ENCODE measurements at regions of chr19 and their contacts with region 1.

Region 1: DNA sequence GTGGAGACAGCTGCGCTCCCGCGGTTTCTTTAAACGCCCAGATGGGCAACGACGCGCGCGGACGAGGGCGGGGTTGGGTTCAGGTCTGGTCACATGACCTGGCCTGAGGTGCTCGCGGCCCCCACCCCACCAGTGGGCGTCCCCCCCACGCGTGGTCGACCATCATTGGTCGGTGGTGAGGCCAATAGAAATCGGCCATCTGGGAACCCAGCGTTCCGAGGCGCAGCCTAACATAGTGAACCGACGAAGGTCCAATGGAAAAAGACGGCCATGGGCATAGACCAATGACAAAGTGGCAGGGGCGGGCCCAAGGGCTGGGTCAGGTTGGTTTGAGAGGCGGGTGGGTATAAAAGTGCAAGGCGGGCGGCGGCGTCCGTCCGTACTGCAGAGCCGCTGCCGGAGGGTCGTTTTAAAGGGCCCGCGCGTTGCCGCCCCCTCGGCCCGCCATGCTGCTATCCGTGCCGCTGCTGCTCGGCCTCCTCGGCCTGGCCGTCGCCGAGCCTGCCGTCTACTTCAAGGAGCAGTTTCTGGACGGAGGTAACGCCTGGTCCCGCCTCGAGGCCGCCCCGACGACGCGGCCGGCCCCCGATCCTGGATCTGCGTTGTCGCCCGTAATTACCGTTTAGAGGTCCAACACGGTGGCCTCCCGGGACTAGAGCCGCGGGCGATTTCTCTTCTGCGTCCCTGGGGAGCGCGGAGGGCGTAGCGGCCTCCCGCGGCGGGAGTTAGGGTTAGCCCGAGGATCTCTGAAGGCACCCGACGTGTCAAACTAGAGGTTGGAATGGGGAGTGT is at the start of gene CALR:
- DNase-seq: peak; percentile 93 to 100 (median 99)
- ATAC-seq: peak; percentile 94
- H3K4me3 ChIP-seq: peak within 1 kb of the TSS; percentile 90
- H3K4me3 Mint-ChIP-seq: peak within 1 kb of the TSS; percentile 90 to 99 (median 98)
- H3K27ac ChIP-seq: peak within 1 kb of the TSS; percentile 94
- H3K27ac Mint-ChIP-seq: peak within 1 kb of the TSS; percentile 93 to 98 (median 96)
- H3K4me1 ChIP-seq: peaks cover 37 to 41% of the 10 kb centered on the region in 2 donors
- H3K4me1 Mint-ChIP-seq: peaks cover 36 to 76% (median 57%) of the 10 kb centered on the region in 7 donors
- H3K27me3 ChIP-seq: no peaks in the 10 kb centered on the region
- H3K27me3 Mint-ChIP-seq: no peaks in the 10 kb centered on the region
- total RNA-seq, gene CALR: 449 to 1,130 (median 502) TPM

Region 2: GRCh38 chr19:12722566-12723380 is 215.7 kb before region 1 on chr19:
- CTCF ChIA-PET with region 1: no interaction called
- POLR2A ChIA-PET with region 1: interaction called, 3 read pairs
- intact Hi-C with region 1: loop called (anchors 5 kb)
- DNase-seq: peak; percentile 66 to 97 (median 91)
- ATAC-seq: peak; percentile 96
- H3K4me3 ChIP-seq: peak overlapping the region; percentile 91
- H3K4me3 Mint-ChIP-seq: peak overlapping the region; percentile 86 to 96 (median 93)
- H3K27ac ChIP-seq: peak overlapping the region; percentile 85
- H3K27ac Mint-ChIP-seq: peak overlapping the region; percentile 89 to 97 (median 95)
- H3K4me1 ChIP-seq: peaks cover 11 to 16% of the 10 kb centered on the region in 2 donors
- H3K4me1 Mint-ChIP-seq: peaks cover 20 to 43% (median 38%) of the 10 kb centered on the region in 7 donors
- H3K27me3 ChIP-seq: no peaks in the 10 kb centered on the region
- H3K27me3 Mint-ChIP-seq: peaks cover 0 to 2% (median 0%) of the 10 kb centered on the region in 5 donors

Region 3: DNA sequence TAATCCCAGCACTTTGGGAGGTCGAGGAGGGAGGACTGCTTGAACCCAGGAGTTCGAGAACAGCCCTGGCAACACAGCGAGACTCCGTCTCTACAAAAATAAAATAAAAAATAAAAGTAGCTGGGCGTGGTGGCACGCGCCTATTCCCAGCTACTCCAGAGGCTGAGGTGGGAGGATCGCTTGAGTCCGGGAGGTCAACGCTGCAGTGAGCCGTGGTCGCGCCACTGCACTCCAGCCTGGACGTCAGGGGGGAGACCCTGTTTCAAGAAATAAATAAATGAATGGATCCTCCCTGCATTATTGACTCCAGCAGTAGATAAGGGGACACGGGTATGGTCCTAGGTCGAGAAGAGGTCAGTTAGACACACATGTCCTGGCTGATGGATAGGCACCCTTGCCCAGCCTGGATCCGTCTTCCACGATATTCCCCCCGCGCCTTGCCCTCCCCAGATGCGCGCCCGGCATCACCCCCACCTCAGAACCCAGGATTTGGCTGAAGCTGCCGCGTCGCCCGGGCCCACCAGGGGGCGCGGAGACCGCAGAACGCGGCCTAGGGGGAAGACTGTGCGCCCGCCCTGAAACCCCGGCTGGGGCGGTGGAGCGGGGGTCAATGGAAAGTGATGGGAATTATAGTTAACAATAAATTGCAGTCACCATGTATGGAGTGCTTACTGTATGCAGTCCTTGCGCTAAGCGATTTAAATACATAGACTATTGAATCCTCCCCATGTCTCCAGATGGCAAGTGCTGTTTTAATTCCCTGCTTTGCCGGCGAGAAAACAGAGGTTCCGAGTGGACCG is 161.0 kb before region 1 on chr19:
- CTCF ChIA-PET with region 1: no interaction called
- POLR2A ChIA-PET with region 1: interaction called, 3 read pairs
- intact Hi-C with region 1: loop called in 1 of 2 experiments (anchors 1 kb)
- DNase-seq: peak; percentile 69 to 89 (median 82)
- ATAC-seq: peak; percentile 18
- H3K4me3 ChIP-seq: peak overlapping the region; percentile 76
- H3K4me3 Mint-ChIP-seq: peak overlapping the region; percentile 82 to 95 (median 87)
- H3K27ac ChIP-seq: peak overlapping the region; percentile 94
- H3K27ac Mint-ChIP-seq: peak overlapping the region; percentile 42 to 98 (median 94)
- H3K4me1 ChIP-seq: peaks cover 16 to 28% of the 10 kb centered on the region in 2 donors
- H3K4me1 Mint-ChIP-seq: peaks cover 20 to 45% (median 39%) of the 10 kb centered on the region in 7 donors
- H3K27me3 ChIP-seq: no peaks in the 10 kb centered on the region
- H3K27me3 Mint-ChIP-seq: no peaks in the 10 kb centered on the region

Region 4: DNA sequence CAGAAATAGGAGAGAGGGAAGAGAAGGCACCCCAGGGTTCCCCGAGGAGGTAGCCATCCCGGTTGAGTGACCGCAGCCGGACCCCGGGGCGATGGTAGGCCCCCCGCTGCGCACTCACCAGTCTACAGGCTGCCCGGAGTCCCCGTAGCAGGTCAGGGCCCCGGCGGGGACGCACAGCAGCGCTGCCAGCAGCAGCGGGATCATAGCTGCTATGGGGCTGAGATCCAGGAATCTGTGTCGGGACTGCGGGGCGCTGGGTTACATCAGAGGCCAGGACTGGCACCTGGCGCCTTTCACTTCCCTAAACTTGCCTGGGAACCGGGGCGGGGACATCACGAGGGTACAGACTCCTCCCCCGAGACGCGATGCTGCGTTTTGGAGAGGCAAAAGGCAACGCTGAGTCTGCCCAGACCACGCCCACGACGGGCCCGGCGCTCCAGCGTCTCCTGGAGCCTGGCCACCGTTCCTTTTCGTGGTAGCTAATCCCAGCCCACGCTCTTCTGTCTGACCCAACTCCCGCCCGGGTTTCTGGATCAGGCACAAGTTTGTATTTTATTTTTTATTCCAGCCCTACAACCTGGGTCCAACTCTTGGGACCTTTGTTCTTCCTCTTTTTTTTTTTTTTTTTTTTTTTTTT is 57.1 kb before region 1 on chr19 and contains the start of gene DNASE2:
- CTCF ChIA-PET with region 1: interaction called, 4 read pairs
- POLR2A ChIA-PET with region 1: interaction called, 9 read pairs
- intact Hi-C with region 1: loop called in 1 of 2 experiments (anchors 1 kb)
- DNase-seq: peak; percentile 69 to 89 (median 81)
- ATAC-seq: peak; percentile 81
- H3K4me3 ChIP-seq: peak within 1 kb of the TSS; percentile 72
- H3K4me3 Mint-ChIP-seq: peak within 1 kb of the TSS; percentile 87 to 94 (median 88)
- H3K27ac ChIP-seq: peak within 1 kb of the TSS; percentile 77
- H3K27ac Mint-ChIP-seq: peak within 1 kb of the TSS; percentile 76 to 94 (median 89)
- H3K4me1 ChIP-seq: peaks cover 10 to 11% of the 10 kb centered on the region in 2 donors
- H3K4me1 Mint-ChIP-seq: peaks cover 20 to 39% (median 30%) of the 10 kb centered on the region in 7 donors
- H3K27me3 ChIP-seq: no peaks in the 10 kb centered on the region
- H3K27me3 Mint-ChIP-seq: peaks cover 0 to 1% (median 0%) of the 10 kb centered on the region in 5 donors
- total RNA-seq, gene DNASE2: 14.2 to 29.9 (median 28.1) TPM

Region 5: DNA sequence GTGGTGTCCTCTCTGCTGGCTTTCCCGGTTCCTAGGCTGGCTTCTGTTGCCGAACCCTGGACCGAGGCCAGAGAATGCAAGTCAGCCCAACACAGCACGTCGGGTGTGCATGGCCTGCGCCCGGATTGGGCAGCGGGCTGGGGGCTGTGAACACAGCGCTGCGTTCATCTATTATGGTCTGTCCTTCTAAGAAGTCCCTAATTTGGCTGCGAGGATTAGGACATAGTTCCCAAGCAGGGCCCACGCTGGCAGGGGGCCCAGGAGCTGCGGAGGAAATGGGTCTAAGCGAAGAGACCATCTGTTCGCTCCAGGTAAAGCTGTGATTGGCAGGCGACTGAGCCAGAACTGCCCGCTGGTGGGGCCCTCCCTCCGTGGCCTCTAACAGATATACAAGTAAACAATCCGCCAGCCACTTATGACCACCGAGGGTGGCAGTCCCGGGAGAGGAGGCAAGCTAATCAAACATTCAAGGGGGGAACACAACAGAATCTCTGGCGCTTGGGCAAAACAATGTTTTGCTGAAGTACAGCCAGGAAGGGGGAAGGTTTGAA is 25.3 kb before region 1 on chr19:
- CTCF ChIA-PET with region 1: interaction called, 5 read pairs
- POLR2A ChIA-PET with region 1: interaction called, 34 read pairs
- intact Hi-C with region 1: loop called in 1 of 2 experiments (anchors 2 kb)
- DNase-seq: no peak
- ATAC-seq: no peak
- H3K4me3 ChIP-seq: no peak overlapping the region
- H3K4me3 Mint-ChIP-seq: peak overlapping the region in 6 of 10 donors; percentile 23 to 88 (median 52)
- H3K27ac ChIP-seq: peak overlapping the region; percentile 54
- H3K27ac Mint-ChIP-seq: peak overlapping the region; percentile 81 to 99 (median 97)
- H3K4me1 ChIP-seq: peaks cover 12 to 23% of the 10 kb centered on the region in 2 donors
- H3K4me1 Mint-ChIP-seq: peaks cover 11 to 32% (median 25%) of the 10 kb centered on the region in 7 donors
- H3K27me3 ChIP-seq: no peaks in the 10 kb centered on the region
- H3K27me3 Mint-ChIP-seq: no peaks in the 10 kb centered on the region

Region 6: DNA sequence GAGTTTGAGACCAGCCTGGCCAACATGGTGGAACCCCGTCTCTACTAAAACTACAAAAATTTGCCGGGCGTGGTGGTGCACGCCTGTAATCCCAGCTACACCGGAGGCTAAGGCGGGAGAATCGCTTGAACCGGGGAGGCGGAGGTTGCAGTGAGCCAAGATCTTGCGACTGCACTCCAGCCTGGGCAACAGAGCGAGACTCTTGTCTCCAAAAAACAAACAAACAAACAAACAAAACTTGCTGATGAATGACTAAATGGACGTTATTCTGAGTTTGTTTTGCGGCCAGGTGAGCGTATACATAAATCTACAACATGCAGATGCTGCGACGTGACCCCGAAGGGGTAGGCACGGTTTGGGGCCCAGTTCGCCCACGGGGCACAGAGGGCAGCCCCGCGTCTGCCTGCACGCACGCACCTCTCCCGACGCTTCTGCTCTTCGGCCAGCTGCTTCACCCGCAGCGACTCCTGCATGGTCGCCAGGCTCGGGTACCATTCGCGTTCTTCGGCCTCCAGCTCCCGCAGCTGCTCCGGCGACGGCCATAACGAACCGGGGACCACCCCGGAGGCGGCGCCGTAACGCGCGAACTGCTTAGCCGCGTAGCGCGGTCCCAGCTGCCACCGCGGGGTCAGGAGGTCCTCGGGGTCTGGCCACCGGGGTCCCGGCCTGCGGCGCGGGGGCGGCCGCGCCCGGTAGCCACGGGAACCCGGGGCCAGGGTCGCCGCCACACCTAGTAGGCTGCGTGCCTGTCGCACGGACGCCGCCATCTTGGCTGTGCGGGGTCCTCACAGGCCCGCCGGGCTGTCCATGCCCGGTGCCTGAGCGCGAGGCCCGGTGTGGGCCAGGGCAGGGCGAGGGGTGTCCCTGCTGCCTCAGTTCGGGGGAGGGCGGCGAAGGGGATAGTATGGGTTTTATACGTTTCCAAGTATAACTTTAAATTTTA is 18.3 kb after region 1 on chr19 and contains the start of gene GADD45GIP1:
- CTCF ChIA-PET with region 1: interaction called, 3 read pairs
- POLR2A ChIA-PET with region 1: interaction called, 22 read pairs
- intact Hi-C with region 1: loop called in 1 of 2 experiments (anchors 1 kb)
- DNase-seq: peak; percentile 68 to 84 (median 80)
- ATAC-seq: peak; percentile 99
- H3K4me3 ChIP-seq: peak within 1 kb of the TSS; percentile 84
- H3K4me3 Mint-ChIP-seq: peak within 1 kb of the TSS; percentile 81 to 93 (median 88)
- H3K27ac ChIP-seq: peak within 1 kb of the TSS; percentile 81
- H3K27ac Mint-ChIP-seq: peak within 1 kb of the TSS; percentile 78 to 94 (median 91)
- H3K4me1 ChIP-seq: peaks cover 0 to 11% of the 10 kb centered on the region in 2 donors
- H3K4me1 Mint-ChIP-seq: peaks cover 16 to 29% (median 22%) of the 10 kb centered on the region in 7 donors
- H3K27me3 ChIP-seq: no peaks in the 10 kb centered on the region
- H3K27me3 Mint-ChIP-seq: no peaks in the 10 kb centered on the region
- total RNA-seq, gene GADD45GIP1: 8.5 to 17.0 (median 13.8) TPM

Region 7: DNA sequence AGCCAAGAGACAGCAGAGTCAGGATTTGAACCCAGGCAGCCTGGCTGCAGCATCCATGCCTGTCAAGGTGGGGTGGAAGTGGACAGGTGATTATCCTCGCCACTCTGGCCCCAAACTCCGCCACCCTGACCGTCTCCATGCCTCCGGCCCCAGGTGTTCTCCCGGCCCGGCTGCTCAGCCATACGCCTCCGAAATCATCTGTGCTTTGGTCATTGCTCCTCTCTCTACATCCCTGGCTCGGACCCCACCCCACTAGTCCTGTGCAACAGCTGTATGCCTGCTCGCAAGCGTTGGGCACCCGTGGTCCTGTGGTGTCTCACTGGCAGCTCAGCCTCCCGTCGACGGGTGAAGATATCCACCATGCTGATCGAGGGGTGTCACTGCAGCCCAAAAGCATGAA is 34.8 kb after region 1 on chr19:
- CTCF ChIA-PET with region 1: no interaction called
- POLR2A ChIA-PET with region 1: no interaction called
- intact Hi-C with region 1: no loop called
- DNase-seq: no peak
- ATAC-seq: no peak
- H3K4me3 ChIP-seq: no peak overlapping the region
- H3K4me3 Mint-ChIP-seq: no peak overlapping the region
- H3K27ac ChIP-seq: no peak overlapping the region
- H3K27ac Mint-ChIP-seq: no peak overlapping the region
- H3K4me1 ChIP-seq: peaks cover 0 to 3% of the 10 kb centered on the region in 2 donors
- H3K4me1 Mint-ChIP-seq: peaks cover 2 to 7% (median 5%) of the 10 kb centered on the region in 7 donors
- H3K27me3 ChIP-seq: no peaks in the 10 kb centered on the region
- H3K27me3 Mint-ChIP-seq: peaks cover 7 to 16% (median 14%) of the 10 kb centered on the region in 5 donors

Region 8: GRCh38 chr19:12983542-12984142 is 45.2 kb after region 1 on chr19:
- CTCF ChIA-PET with region 1: no interaction called
- POLR2A ChIA-PET with region 1: no interaction called
- intact Hi-C with region 1: no loop called
- DNase-seq: peak; percentile 72 to 93 (median 84)
- ATAC-seq: peak; percentile 94
- H3K4me3 ChIP-seq: no peak overlapping the region
- H3K4me3 Mint-ChIP-seq: no peak overlapping the region
- H3K27ac ChIP-seq: peak overlapping the region; percentile 32
- H3K27ac Mint-ChIP-seq: no peak overlapping the region
- H3K4me1 ChIP-seq: peaks cover 6 to 16% of the 10 kb centered on the region in 2 donors
- H3K4me1 Mint-ChIP-seq: peaks cover 0 to 9% (median 0%) of the 10 kb centered on the region in 7 donors
- H3K27me3 ChIP-seq: no peaks in the 10 kb centered on the region
- H3K27me3 Mint-ChIP-seq: peaks cover 0 to 11% (median 0%) of the 10 kb centered on the region in 5 donors

Region 9: GRCh38 chr19:12994701-12995595 is 56.5 kb after region 1 on chr19 and contains the start of gene NFIX:
- CTCF ChIA-PET with region 1: no interaction called
- POLR2A ChIA-PET with region 1: no interaction called
- intact Hi-C with region 1: no loop called
- DNase-seq: peak; percentile 37 to 76 (median 54)
- ATAC-seq: peak; percentile 75
- H3K4me3 ChIP-seq: peak within 1 kb of the TSS; percentile 43
- H3K4me3 Mint-ChIP-seq: peak within 1 kb of the TSS; percentile 84 to 97 (median 93)
- H3K27ac ChIP-seq: no peak within 1 kb of the TSS
- H3K27ac Mint-ChIP-seq: peak within 1 kb of the TSS; percentile 27 to 95 (median 82)
- H3K4me1 ChIP-seq: no peaks in the 10 kb centered on the region
- H3K4me1 Mint-ChIP-seq: peaks cover 6 to 22% (median 13%) of the 10 kb centered on the region in 7 donors
- H3K27me3 ChIP-seq: no peaks in the 10 kb centered on the region
- H3K27me3 Mint-ChIP-seq: peaks cover 0 to 39% (median 5%) of the 10 kb centered on the region in 5 donors
- total RNA-seq, gene NFIX: 2.4 to 7.7 (median 6.3) TPM

Region 10: GRCh38 chr19:14015524-14016035 is 1077.2 kb after region 1 on chr19:
- CTCF ChIA-PET with region 1: no interaction called
- POLR2A ChIA-PET with region 1: no interaction called
- intact Hi-C with region 1: loop called in 1 of 2 experiments (anchors 10 kb)
- DNase-seq: no peak
- ATAC-seq: no peak
- H3K4me3 ChIP-seq: no peak overlapping the region
- H3K4me3 Mint-ChIP-seq: no peak overlapping the region
- H3K27ac ChIP-seq: no peak overlapping the region
- H3K27ac Mint-ChIP-seq: no peak overlapping the region
- H3K4me1 ChIP-seq: no peaks in the 10 kb centered on the region
- H3K4me1 Mint-ChIP-seq: peaks cover 0 to 12% (median 0%) of the 10 kb centered on the region in 7 donors
- H3K27me3 ChIP-seq: no peaks in the 10 kb centered on the region
- H3K27me3 Mint-ChIP-seq: peaks cover 0 to 3% (median 0%) of the 10 kb centered on the region in 5 donors

Measured in naive thymus-derived CD4-positive, alpha-beta T cell (primary cell).